ENCODE measurements at regions of chr1 and their contacts with region 1.

Region 1: GRCh38 chr1:243748706-243749283 is 101.2 kb downstream of the AKT3 start:
- H3K4me3 ChIP-seq: no peak overlapping the region
- H3K27ac ChIP-seq: no peak overlapping the region
- H3K4me1 ChIP-seq: no peaks in the 10 kb centered on the region
- CTCF ChIP-seq: peak; percentile 63

Region 2: DNA sequence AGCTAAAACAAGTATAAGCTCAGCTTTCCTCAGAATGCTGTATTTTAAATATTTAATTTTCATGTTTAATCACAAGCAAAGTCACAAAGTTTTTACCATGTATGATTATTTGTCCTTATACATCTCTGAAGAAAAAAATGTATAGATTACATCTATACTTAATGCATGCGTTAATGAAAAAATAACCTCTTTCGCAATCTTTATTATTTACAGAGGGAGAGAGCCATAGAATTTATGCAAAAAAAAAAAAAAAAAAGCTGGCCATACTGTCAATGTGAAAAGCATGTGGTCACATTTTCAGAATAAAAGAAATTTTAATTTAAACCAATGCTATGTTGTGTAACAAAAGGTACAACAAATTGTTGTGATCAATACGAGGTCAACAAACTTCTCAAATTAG is 46.9 kb before region 1 on chr1:
- CTCF ChIA-PET with region 1: no interaction called
- POLR2A ChIA-PET with region 1: no interaction called
- H3K4me3 ChIP-seq: no peak overlapping the region
- H3K27ac ChIP-seq: no peak overlapping the region
- H3K4me1 ChIP-seq: peaks cover 3% of the 10 kb centered on the region; the same call in 1 of the 2 replicates
- CTCF ChIP-seq: no peak

Region 3: DNA sequence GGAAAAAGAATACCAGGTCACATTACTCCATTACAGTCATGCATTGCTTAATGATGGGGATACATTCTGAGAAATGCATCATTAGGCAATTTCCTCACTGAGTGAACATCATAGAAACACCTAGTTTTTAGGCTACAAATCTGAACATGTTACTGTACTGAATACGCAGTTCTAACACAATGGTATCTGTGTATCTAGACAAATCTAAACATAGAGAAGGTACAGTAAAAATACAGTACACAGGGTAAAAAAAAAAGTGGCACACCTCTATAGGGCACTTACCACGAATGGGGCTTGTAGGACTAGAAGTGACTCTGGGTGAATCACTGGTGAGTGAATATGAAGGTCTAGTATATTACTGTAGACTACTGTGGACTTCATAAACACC is 14.5 kb before region 1 on chr1:
- CTCF ChIA-PET with region 1: interaction called, 15 read pairs
- POLR2A ChIA-PET with region 1: no interaction called
- H3K4me3 ChIP-seq: no peak overlapping the region
- H3K27ac ChIP-seq: no peak overlapping the region
- H3K4me1 ChIP-seq: no peaks in the 10 kb centered on the region
- CTCF ChIP-seq: no peak

Region 4: GRCh38 chr1:243763806-243764205 is 15.0 kb after region 1 on chr1:
- CTCF ChIA-PET with region 1: interaction called, 22 read pairs
- POLR2A ChIA-PET with region 1: no interaction called
- H3K4me3 ChIP-seq: no peak overlapping the region
- H3K27ac ChIP-seq: no peak overlapping the region
- H3K4me1 ChIP-seq: no peaks in the 10 kb centered on the region
- CTCF ChIP-seq: no peak

Region 5: GRCh38 chr1:243890576-243890975 is 141.8 kb after region 1 on chr1:
- CTCF ChIA-PET with region 1: no interaction called
- POLR2A ChIA-PET with region 1: no interaction called
- H3K4me3 ChIP-seq: no peak overlapping the region
- H3K27ac ChIP-seq: no peak overlapping the region
- H3K4me1 ChIP-seq: peaks cover 3% of the 10 kb centered on the region; the same call in 1 of the 2 replicates
- CTCF ChIP-seq: no peak